ENCODE measurements at regions of chr18 and their contacts with region 1.

Region 1: DNA sequence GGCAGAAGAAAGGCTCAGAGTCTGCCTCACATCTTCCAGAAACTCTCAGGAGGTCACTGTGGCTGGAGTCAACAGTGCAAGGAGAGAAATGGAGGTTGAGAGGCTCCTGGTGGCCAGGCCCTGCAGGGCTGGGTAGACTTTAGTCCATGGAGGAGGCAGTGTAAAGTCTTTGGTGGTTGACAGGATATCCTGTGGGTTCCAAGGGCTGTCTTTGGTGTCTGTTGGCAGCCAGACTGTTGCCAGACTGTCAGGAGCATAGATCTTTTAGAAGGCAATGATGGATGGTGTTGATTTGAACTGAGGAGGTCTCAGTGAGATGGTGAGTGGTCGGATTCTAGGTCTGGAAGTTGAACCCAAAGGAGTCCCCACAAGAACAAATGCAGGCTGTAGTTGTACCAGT is 45.0 kb upstream of the SKOR2 start:
- DNase-seq: no peak
- H3K4me3 ChIP-seq: no peak overlapping the region
- H3K27ac ChIP-seq: no peak overlapping the region
- H3K4me1 ChIP-seq: no peaks in the 10 kb centered on the region
- H3K27me3 ChIP-seq: no peaks in the 10 kb centered on the region
- CTCF ChIP-seq: no peak
- EP300 ChIP-seq: no peak
- POLR2A ChIP-seq: no peak

Region 2: GRCh38 chr18:47710451-47710850 is 414.0 kb after region 1 on chr18:
- intact Hi-C with region 1: loop called in 1 of 4 experiments (anchors 5 kb)
- DNase-seq: no peak
- H3K4me3 ChIP-seq: no peak overlapping the region
- H3K27ac ChIP-seq: no peak overlapping the region
- H3K4me1 ChIP-seq: no peaks in the 10 kb centered on the region
- H3K27me3 ChIP-seq: no peaks in the 10 kb centered on the region
- CTCF ChIP-seq: no peak
- EP300 ChIP-seq: no peak
- POLR2A ChIP-seq: no peak